ENCODE measurements at regions of chr18 and their contacts with region 1.

Region 1: GRCh38 chr18:55337908-55338521 is 250.0 kb downstream of the TCF4 start:
- DNase-seq: peak; percentile 35 to 60
- ATAC-seq: peak; percentile 80 to 88 (median 84)
- H3K4me3 ChIP-seq: peak overlapping the region; percentile 57
- H3K27ac ChIP-seq: peak overlapping the region; percentile 91
- H3K4me1 ChIP-seq: peaks cover 55% of the 10 kb centered on the region
- H3K27me3 ChIP-seq: no peaks in the 10 kb centered on the region
- CTCF ChIP-seq: no peak

Region 2: GRCh38 chr18:55251254-55251971 is 86.6 kb before region 1 on chr18:
- intact Hi-C with region 1: no loop called
- DNase-seq: no peak
- ATAC-seq: peak; percentile 66 to 79 (median 72)
- H3K4me3 ChIP-seq: peak overlapping the region; percentile 8
- H3K27ac ChIP-seq: peak overlapping the region; percentile 60
- H3K4me1 ChIP-seq: peaks cover 32% of the 10 kb centered on the region
- H3K27me3 ChIP-seq: no peaks in the 10 kb centered on the region
- CTCF ChIP-seq: no peak

Region 3: DNA sequence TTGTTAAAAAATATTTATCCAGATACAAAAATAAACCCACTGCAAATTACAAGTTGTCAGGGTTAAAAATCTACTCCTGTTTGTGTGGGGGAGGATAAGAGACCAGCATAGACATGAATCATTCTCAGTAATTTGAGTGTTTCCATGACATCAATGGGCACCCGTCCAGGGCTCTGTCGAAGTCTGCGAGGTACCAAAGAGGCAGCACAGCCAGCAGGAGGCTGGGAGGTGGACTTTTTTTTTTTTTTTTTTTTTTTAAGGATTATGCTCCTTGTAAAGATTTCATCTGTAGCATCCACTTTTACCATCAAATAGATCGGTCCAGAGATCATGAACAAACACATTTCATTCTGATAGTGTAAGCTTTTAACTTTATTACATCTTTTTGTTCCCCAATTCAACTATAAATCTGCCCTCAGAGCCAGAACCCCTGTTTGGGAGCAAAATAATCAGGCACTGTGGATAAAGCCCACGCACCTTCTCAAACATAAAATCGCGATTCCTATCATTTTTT is 67.9 kb after region 1 on chr18:
- intact Hi-C with region 1: loop called (anchors 2 to 5 kb)
- DNase-seq: peak; percentile 90 to 94
- ATAC-seq: peak; percentile 84 to 93 (median 92)
- H3K4me3 ChIP-seq: peak overlapping the region; percentile 64
- H3K27ac ChIP-seq: peak overlapping the region; percentile 79
- H3K4me1 ChIP-seq: peaks cover 25% of the 10 kb centered on the region
- H3K27me3 ChIP-seq: no peaks in the 10 kb centered on the region
- CTCF ChIP-seq: peak; percentile 36

Region 4: GRCh38 chr18:55577812-55578539 is 240.0 kb after region 1 on chr18:
- intact Hi-C with region 1: loop called in 1 of 2 experiments (anchors 5 kb)
- DNase-seq: no peak
- ATAC-seq: peak; percentile 75 to 85 (median 80)
- H3K4me3 ChIP-seq: peak overlapping the region; percentile 57
- H3K27ac ChIP-seq: peak overlapping the region; percentile 78
- H3K4me1 ChIP-seq: peaks cover 66% of the 10 kb centered on the region
- H3K27me3 ChIP-seq: no peaks in the 10 kb centered on the region
- CTCF ChIP-seq: peak; percentile 27

Measured in psoas muscle (tissue), 8 donors.